OCI-LY7 (cell line): ENCODE measurements at regions of chr14 and their contacts with region 1.

Region 1: DNA sequence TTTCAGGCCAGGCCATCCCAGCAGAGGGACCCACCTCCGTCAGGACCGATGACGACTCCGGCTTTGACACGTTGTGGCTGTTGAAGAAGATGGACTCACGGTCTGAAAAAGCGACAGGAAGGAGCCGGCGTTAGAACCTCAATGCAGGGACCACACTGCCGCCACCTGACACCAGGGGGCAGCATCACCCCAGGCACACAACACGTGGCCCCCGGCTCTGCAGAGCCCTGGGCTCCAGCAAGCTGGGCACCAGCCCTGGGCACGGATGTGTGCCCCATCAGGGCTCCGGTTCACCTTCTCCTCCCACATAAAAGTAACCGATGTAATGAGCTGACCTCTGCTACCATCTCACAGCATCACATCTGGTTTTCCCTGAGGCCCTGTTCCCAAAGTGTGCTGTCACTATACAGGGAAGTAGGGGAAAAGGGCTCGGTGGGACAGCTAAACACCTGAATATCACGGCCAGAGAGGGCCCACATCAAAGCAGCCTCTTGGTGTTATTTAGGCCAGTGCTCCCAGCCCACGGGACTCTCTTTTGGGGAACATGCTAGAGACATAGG is 29.0 kb downstream of the CHGA start:
- DNase-seq: peak; percentile 79
- H3K4me3 ChIP-seq: no peak overlapping the region
- H3K27ac ChIP-seq: no peak overlapping the region
- H3K4me1 ChIP-seq: peaks cover 4% of the 10 kb centered on the region
- CTCF ChIP-seq: peak; percentile 95

Region 2: DNA sequence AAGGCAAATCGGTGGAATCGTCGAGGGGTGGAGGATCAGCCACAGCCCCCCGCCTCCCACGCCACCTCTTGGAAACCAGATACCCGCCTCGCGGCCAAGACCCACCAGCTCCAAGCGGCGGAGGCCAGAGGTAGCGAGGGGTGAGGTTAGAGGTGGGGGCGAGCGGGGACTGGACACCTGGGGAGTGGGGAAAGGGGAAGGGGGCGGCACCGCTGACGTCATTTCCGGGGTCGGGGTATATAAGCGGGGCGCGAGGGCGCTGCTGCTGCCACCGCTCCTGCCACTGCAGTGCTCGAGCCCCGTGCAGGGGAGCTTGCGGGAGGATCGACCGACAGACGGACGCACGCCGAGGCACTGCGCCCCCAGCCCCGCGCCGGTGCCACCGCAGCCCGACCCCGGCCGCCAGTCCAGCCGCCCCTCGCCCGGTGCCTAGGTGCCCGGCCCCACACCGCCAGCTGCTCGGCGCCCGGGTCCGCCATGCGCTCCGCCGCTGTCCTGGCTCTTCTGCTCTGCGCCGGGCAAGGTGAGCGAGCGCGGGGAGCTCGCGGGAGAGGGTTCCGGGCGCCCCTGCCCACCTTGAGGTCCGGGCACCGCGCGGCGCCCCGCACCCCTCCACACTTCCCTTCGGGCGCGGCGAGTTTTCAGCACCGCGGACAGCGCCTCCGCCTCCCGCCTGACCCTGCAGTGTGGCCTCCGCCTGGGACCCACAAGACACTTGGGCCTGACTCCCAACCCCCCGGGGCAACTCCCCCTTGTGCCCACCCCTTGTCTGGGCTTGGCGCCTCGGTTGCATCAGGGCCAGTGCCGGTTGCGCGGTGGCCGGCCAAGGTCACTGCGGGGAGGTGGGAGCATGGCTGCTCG is 28.9 kb before region 1 on chr14 and contains the start of gene CHGA:
- CTCF ChIA-PET with region 1: interaction called, 13 read pairs
- POLR2A ChIA-PET with region 1: no interaction called
- intact Hi-C with region 1: no loop called
- DNase-seq: peak; percentile 37
- H3K4me3 ChIP-seq: peak within 1 kb of the TSS; percentile 17
- H3K27ac ChIP-seq: peak within 1 kb of the TSS; percentile 67
- H3K4me1 ChIP-seq: peaks cover 60% of the 10 kb centered on the region
- CTCF ChIP-seq: no peak
- total RNA-seq, gene CHGA: not detected in 2 replicates

Region 3: DNA sequence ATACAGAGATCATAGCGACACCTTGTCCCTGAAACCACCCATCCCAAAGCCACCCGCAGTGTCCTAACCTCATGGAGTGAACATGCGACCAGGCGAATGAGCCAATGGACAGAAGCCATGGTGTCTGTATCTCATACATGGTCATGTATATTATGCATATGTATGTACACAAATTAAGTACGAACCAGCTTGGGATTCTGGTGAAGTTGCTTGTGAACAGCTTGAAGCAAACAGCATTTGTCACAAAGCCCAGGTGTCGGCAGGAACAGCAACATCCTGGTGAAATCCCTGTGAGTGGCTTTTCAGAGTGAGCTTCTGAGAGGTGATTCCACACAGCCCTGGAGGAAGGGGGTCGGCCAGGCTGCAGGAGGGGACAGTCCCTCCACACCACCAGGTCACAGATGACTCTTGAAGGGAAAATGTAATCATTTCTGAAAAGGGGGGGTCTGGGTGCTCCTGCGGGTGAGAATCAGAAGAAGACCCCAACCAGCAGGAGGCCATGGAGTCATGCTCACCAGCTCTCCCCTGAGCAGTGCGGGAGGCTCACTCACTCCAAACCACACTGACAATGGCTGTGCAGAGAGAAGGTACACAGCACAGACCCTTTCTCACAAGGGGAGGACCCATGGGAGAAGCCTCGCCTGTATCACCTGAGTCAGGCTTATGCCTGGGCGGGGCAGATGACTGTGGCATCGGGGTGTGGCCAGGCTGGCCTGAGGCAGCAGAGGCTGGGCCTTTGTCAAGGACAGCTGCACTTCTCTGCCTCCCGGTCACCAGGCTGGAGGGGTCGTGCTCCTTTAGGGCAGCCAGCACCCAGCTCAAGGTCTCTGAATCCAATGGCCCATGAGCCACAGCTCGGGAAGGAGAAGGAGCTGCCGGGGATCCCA is 14.7 kb before region 1 on chr14:
- CTCF ChIA-PET with region 1: no interaction called
- POLR2A ChIA-PET with region 1: no interaction called
- intact Hi-C with region 1: no loop called
- DNase-seq: no peak
- H3K4me3 ChIP-seq: no peak overlapping the region
- H3K27ac ChIP-seq: no peak overlapping the region
- H3K4me1 ChIP-seq: no peaks in the 10 kb centered on the region
- CTCF ChIP-seq: no peak

Region 4: DNA sequence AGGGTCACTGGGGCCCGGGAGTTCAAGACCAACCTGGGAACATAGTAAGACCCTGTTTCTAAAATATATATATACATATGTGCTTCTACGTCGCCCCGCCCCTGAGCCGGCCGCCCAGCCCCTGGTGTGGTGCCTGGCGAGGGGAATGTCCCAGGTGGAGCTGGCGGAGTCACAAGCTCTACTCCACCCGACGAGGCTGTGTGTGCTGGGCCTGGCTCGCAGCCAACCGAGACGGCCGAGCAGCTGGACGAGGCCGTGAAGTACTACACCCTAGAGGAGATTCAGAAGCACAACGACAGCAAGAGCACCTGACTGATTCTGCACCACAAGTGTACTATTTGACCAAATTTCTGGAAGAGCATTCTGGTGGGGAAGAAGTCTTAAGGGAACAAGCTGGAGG is 185.9 kb after region 1 on chr14:
- CTCF ChIA-PET with region 1: no interaction called
- POLR2A ChIA-PET with region 1: no interaction called
- intact Hi-C with region 1: loop called (anchors 1 kb)
- DNase-seq: peak; percentile 24
- H3K4me3 ChIP-seq: no peak overlapping the region
- H3K27ac ChIP-seq: no peak overlapping the region
- H3K4me1 ChIP-seq: no peaks in the 10 kb centered on the region
- CTCF ChIP-seq: no peak; the same call in 1 of the 2 replicates

Region 5: DNA sequence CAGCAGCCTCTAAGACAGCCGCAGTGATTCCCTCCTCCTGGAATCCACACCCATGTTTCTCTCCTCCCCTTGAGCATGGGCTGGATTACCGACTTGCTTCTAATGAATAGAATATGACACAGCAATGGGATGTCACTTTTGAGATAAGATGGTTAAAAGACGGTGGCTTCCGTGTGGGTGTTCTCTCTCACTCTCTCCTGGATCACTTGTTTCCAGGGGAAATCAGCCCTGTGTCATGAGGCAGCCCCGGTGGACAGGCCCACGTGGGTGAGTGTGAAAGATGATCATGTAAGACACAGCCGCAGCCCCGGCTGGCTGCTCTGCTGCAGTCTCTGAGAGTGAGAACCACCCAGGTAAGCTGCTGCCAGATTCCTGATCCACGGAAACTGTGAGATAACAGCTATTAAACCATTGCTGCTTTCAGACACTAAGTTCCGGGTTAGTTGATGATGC is 222.0 kb after region 1 on chr14:
- CTCF ChIA-PET with region 1: no interaction called
- POLR2A ChIA-PET with region 1: no interaction called
- intact Hi-C with region 1: loop called (anchors 1 kb)
- DNase-seq: no peak
- H3K4me3 ChIP-seq: no peak overlapping the region
- H3K27ac ChIP-seq: no peak overlapping the region
- H3K4me1 ChIP-seq: no peaks in the 10 kb centered on the region
- CTCF ChIP-seq: no peak

Region 6: GRCh38 chr14:93219103-93219726 is 267.2 kb after region 1 on chr14:
- CTCF ChIA-PET with region 1: no interaction called
- POLR2A ChIA-PET with region 1: no interaction called
- intact Hi-C with region 1: loop called (anchors 5 kb)
- DNase-seq: peak; percentile 77
- H3K4me3 ChIP-seq: no peak overlapping the region
- H3K27ac ChIP-seq: no peak overlapping the region
- H3K4me1 ChIP-seq: no peaks in the 10 kb centered on the region
- CTCF ChIP-seq: peak; percentile 94